ENCODE measurements at regions of chr5 and their contacts with region 1.

Region 1: DNA sequence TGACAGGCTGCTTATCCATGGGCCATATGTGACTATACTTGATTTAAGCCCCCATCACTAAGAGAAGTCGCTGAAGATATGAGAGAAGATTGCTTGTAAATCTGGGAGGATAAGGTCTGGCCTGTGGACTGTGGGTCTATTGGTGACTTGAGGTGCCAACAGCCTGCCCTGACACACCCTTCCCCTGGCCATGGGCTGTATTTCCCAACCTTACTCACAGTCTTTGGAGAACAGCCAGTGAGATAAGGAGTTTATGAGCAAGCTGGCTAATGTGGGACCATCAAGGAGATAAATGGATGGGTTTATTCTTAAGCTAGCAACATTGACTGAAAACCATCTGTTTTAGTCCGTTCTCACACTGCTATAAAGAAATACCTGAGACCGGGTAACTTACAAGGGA is 231.3 kb downstream of the ZSWIM6 start:
- DNase-seq: peak; percentile 6
- H3K4me3 ChIP-seq: no peak overlapping the region
- H3K27ac ChIP-seq: no peak overlapping the region
- H3K4me1 ChIP-seq: no peaks in the 10 kb centered on the region
- H3K27me3 ChIP-seq: no peaks in the 10 kb centered on the region
- CTCF ChIP-seq: no peak

Region 2: GRCh38 chr5:61538722-61539501 is 24.5 kb before region 1 on chr5:
- CTCF ChIA-PET with region 1: no interaction called
- dilution Hi-C with region 1: no loop called
- in situ Hi-C with region 1: no loop called
- intact Hi-C with region 1: no loop called
- DNase-seq: peak; percentile 2
- H3K4me3 ChIP-seq: no peak overlapping the region
- H3K27ac ChIP-seq: no peak overlapping the region
- H3K4me1 ChIP-seq: no peaks in the 10 kb centered on the region
- H3K27me3 ChIP-seq: no peaks in the 10 kb centered on the region
- CTCF ChIP-seq: no peak

Region 3: DNA sequence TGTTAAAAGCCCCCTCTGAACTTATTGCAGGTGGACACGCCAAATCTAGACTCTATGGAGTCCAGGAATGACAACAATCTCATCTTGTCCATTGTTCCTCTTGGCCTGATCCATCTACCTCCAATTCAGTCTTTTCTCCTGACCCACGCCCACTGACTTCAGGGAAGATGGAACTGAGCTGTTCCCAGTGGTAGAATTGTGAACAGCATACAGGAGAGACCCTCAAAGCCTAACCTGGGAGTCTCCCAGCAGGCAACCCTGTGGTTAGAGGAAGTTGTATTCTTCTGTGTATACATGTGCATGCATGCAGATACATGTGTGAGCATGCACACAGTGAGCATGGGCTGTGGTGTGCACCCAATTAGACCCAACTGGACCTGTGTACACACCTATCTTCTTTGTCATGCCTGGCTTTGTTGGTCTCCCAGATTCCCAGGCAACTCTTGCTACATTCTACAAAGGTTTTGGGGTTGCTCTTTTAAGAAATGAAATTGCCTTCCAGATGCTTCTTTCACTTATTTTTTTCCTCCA is 54.7 kb after region 1 on chr5:
- CTCF ChIA-PET with region 1: no interaction called
- dilution Hi-C with region 1: loop called (anchors 10 kb)
- in situ Hi-C with region 1: no loop called
- intact Hi-C with region 1: no loop called
- DNase-seq: peak; percentile 40
- H3K4me3 ChIP-seq: no peak overlapping the region
- H3K27ac ChIP-seq: no peak overlapping the region
- H3K4me1 ChIP-seq: peaks cover 4% of the 10 kb centered on the region
- H3K27me3 ChIP-seq: no peaks in the 10 kb centered on the region
- CTCF ChIP-seq: peak in 1 of 2 donors; percentile 24

Region 4: DNA sequence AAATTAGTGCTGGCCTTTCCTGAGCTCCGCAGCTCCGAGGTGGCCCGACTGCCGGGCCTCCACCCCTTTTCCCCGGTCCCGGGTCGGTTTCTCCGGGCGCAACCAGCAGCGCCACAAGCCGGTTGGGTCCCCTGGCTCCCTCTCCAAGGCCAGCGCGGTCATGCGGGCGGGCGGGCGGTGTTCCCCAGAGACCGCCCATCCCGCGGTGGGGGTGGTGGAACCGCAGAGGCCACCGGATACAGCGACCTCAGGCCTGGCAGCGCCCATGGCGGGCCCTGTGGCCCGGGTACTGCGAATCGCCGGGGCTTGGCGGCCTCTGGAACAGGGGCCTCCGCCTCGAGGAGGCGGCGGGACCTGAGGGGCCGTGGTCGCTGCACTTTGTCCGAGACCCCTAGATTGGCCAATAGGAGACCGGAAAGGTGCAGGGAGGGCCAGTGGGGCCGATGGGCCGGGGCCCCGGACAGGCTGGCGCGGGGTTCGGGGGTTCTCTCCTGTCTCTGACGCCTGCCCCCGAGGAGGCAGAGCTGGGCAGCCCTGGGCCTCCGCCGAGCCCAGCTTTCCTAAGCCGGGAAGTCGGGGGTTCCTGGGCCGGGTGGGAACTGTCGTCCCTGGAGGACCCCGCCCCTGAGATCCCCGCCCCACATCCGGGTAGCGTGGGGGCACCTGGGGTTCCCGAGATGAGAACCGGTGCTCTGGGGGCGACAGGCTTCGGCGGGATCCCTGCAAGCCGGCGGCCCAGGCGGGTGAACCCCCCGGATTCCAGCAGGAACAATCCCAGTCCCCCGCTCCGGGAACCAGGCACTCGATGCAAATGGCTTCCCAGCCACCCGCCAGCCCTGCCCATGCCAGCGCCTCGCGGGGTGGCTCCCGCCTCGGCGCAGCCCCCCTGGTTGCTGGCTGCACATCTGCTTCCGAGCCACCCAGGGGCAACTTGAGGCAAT is 62.5 kb after region 1 on chr5:
- CTCF ChIA-PET with region 1: interaction called, 15 read pairs
- dilution Hi-C with region 1: no loop called
- in situ Hi-C with region 1: no loop called
- intact Hi-C with region 1: no loop called
- DNase-seq: no peak
- H3K4me3 ChIP-seq: peak overlapping the region; percentile 44 to 51 (median 49)
- H3K27ac ChIP-seq: no peak overlapping the region
- H3K4me1 ChIP-seq: peaks cover 6% of the 10 kb centered on the region
- H3K27me3 ChIP-seq: no peaks in the 10 kb centered on the region
- CTCF ChIP-seq: no peak

Region 5: GRCh38 chr5:61823781-61824180 is 260.4 kb after region 1 on chr5:
- CTCF ChIA-PET with region 1: no interaction called
- dilution Hi-C with region 1: no loop called
- in situ Hi-C with region 1: no loop called
- intact Hi-C with region 1: no loop called
- DNase-seq: no peak
- H3K4me3 ChIP-seq: no peak overlapping the region
- H3K27ac ChIP-seq: no peak overlapping the region
- H3K4me1 ChIP-seq: no peaks in the 10 kb centered on the region
- H3K27me3 ChIP-seq: no peaks in the 10 kb centered on the region
- CTCF ChIP-seq: no peak

Measured in mammary epithelial cell (primary cell).